WTC11 (cell line): ENCODE measurements at regions of chr7 and their contacts with region 1.

Region 1: GRCh38 chr7:92447345-92448204 is at the start of gene GATAD1:
- DNase-seq: peak; percentile 90
- ATAC-seq: peak; percentile 91
- H3K4me3 Mint-ChIP-seq: peak within 1 kb of the TSS; percentile 77
- H3K27ac Mint-ChIP-seq: peak within 1 kb of the TSS; percentile 72
- H3K4me1 Mint-ChIP-seq: peaks cover 9% of the 10 kb centered on the region
- H3K27me3 Mint-ChIP-seq: no peaks in the 10 kb centered on the region
- CTCF ChIP-seq: peak; percentile 14
- total RNA-seq, gene GATAD1: 34.4 to 37.6 TPM (median 36.4 TPM) in 3 replicates

Region 2: DNA sequence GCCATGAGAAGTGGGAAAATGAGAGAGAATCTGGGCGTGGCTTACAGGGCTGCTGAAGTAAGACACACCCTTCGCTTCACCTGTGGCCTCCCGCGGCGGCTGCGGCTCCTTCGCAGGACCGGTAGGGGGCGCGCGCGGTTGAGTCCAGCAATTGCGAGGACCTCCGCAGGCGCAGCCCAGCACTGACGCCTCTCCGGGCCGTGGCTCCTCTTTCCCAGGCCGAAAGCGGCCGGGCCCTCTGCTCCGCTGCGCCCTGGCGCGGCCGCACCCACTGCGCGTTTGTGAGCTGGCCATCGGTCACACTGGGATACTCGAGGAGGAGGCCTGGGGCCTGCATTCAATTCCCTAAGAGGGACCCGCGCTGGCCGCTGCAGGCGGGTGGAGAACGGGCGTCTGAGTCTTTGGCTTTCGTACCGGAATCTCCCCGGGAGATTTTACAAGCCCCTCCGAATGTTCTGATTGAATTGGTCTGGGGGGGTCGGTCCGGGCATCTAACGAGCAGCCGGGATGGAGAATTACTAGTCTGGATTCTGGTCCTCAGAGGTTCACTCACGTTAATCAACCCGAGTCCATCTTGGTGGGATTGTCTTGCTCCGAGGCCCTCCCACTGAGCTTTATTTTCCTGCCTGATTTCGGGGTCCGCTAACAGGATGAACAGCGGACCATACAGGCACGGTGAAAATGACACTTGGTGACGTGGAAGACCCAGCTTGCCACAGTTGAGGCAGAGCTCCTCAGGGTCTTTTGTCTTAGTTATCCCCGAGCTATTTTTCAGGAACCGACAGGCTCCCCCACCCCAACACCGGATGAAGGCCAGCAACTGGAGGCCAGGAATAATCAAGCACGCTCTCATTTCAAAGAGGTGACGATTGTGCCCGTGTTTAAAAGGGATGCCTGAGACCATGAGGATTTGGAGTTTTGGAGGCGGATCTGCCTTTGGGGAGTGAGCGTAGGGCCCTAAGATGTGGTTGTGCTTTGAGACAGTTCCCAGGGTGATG is 268.3 kb before region 1 on chr7 and contains the start of gene LRRD1:
- CTCF ChIA-PET with region 1: interaction called, 15 read pairs
- POLR2A ChIA-PET with region 1: no interaction called
- DNase-seq: peak; percentile 97
- ATAC-seq: peak; percentile 99
- H3K4me3 Mint-ChIP-seq: peak within 1 kb of the TSS; percentile 73
- H3K27ac Mint-ChIP-seq: no peak within 1 kb of the TSS; the same call in 1 of the 2 replicates
- H3K4me1 Mint-ChIP-seq: 0 out of 2 replicates have a peak, but pooled peaks cover 3% of the 10 kb centered on the region
- H3K27me3 Mint-ChIP-seq: peaks cover 27% of the 10 kb centered on the region
- CTCF ChIP-seq: peak; percentile 97
- total RNA-seq, gene LRRD1: not detected in 3 replicates

Region 3: GRCh38 chr7:92404170-92404614 is 43.4 kb before region 1 on chr7:
- CTCF ChIA-PET with region 1: interaction called, 10 read pairs
- POLR2A ChIA-PET with region 1: no interaction called
- DNase-seq: no peak
- ATAC-seq: peak; percentile 73
- H3K4me3 Mint-ChIP-seq: no peak overlapping the region
- H3K27ac Mint-ChIP-seq: no peak overlapping the region; the same call in 1 of the 2 replicates
- H3K4me1 Mint-ChIP-seq: peaks cover 6% of the 10 kb centered on the region
- H3K27me3 Mint-ChIP-seq: no peaks in the 10 kb centered on the region
- CTCF ChIP-seq: no peak

Region 4: DNA sequence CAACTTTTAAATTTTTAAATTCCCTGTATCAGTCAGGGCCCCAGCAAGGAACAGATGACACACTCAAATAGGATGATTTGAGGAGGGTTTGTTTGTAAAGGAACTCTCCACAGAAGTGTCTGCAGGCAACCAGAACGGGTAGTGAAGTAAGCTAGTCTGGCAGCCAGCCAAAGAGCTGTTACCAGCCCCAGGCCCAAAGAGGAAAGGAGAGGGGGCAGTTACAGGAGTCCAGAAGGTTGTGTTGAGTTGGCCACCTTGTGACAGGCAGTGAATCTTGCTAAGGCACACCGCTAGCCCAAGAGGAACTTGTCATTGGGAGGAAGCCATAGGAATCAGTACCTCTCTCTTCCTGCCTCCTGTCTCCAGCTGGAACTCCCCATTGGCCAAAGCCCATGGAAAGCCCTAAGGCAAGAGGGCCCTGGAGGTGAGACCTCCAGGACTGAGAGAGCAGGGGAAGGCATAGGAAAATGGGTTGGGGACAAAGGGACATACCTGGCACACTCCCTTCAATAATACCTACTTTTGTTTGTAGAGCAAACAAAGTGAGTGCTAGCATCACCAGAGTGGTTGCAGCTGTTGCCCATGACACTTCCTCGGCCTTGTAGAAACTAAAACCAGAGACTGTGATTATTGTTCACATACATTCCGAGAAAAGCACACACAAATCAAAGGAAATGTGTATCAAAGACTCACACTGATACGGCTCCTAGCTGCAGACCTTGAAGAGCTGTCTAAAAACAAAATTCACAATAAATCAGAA is 25.7 kb before region 1 on chr7:
- CTCF ChIA-PET with region 1: interaction called, 177 read pairs
- POLR2A ChIA-PET with region 1: interaction called, 13 read pairs
- DNase-seq: no peak
- ATAC-seq: no peak
- H3K4me3 Mint-ChIP-seq: no peak overlapping the region
- H3K27ac Mint-ChIP-seq: no peak overlapping the region
- H3K4me1 Mint-ChIP-seq: peaks cover 24% of the 10 kb centered on the region
- H3K27me3 Mint-ChIP-seq: no peaks in the 10 kb centered on the region; the same call in none of the 2 replicates
- CTCF ChIP-seq: no peak

Region 5: GRCh38 chr7:92461027-92462003 is 13.7 kb after region 1 on chr7:
- CTCF ChIA-PET with region 1: interaction called, 42 read pairs
- POLR2A ChIA-PET with region 1: interaction called, 3 read pairs
- DNase-seq: peak; percentile 33
- ATAC-seq: peak; percentile 85
- H3K4me3 Mint-ChIP-seq: no peak overlapping the region
- H3K27ac Mint-ChIP-seq: no peak overlapping the region
- H3K4me1 Mint-ChIP-seq: 0 out of 2 replicates have a peak, but pooled peaks cover 3% of the 10 kb centered on the region
- H3K27me3 Mint-ChIP-seq: no peaks in the 10 kb centered on the region
- CTCF ChIP-seq: peak; percentile 25; the same call in 1 of the 2 replicates

Region 6: GRCh38 chr7:92485267-92485892 is 37.8 kb after region 1 on chr7:
- CTCF ChIA-PET with region 1: no interaction called
- POLR2A ChIA-PET with region 1: no interaction called
- DNase-seq: no peak
- ATAC-seq: no peak
- H3K4me3 Mint-ChIP-seq: no peak overlapping the region
- H3K27ac Mint-ChIP-seq: no peak overlapping the region
- H3K4me1 Mint-ChIP-seq: no peaks in the 10 kb centered on the region
- H3K27me3 Mint-ChIP-seq: no peaks in the 10 kb centered on the region
- CTCF ChIP-seq: no peak